ENCODE measurements at regions of chr6 and their contacts with region 1.

Region 1: GRCh38 chr6:25889877-25890853 is 16.1 kb upstream of the SLC17A3 start:
- DNase-seq: peak; percentile 39 to 67
- H3K4me3 ChIP-seq: no peak overlapping the region
- H3K4me3 Mint-ChIP-seq: no peak overlapping the region
- H3K27ac Mint-ChIP-seq: no peak overlapping the region
- H3K4me1 ChIP-seq: no peaks in the 10 kb centered on the region
- H3K4me1 Mint-ChIP-seq: no peaks in the 10 kb centered on the region
- H3K27me3 ChIP-seq: no peaks in the 10 kb centered on the region
- H3K27me3 Mint-ChIP-seq: no peaks in the 10 kb centered on the region
- CTCF ChIP-seq: peak; percentile 31 to 50

Region 2: GRCh38 chr6:25788305-25788922 is 101.8 kb before region 1 on chr6:
- CTCF ChIA-PET with region 1: interaction called, 5 read pairs
- POLR2A ChIA-PET with region 1: no interaction called
- intact Hi-C with region 1: loop called (anchors 1 kb)
- DNase-seq: peak; percentile 66 to 77
- H3K4me3 ChIP-seq: no peak overlapping the region
- H3K4me3 Mint-ChIP-seq: no peak overlapping the region
- H3K27ac Mint-ChIP-seq: no peak overlapping the region
- H3K4me1 ChIP-seq: no peaks in the 10 kb centered on the region
- H3K4me1 Mint-ChIP-seq: no peaks in the 10 kb centered on the region
- H3K27me3 ChIP-seq: no peaks in the 10 kb centered on the region
- H3K27me3 Mint-ChIP-seq: peaks cover 3% of the 10 kb centered on the region
- CTCF ChIP-seq: peak; percentile 46 to 73

Region 3: DNA sequence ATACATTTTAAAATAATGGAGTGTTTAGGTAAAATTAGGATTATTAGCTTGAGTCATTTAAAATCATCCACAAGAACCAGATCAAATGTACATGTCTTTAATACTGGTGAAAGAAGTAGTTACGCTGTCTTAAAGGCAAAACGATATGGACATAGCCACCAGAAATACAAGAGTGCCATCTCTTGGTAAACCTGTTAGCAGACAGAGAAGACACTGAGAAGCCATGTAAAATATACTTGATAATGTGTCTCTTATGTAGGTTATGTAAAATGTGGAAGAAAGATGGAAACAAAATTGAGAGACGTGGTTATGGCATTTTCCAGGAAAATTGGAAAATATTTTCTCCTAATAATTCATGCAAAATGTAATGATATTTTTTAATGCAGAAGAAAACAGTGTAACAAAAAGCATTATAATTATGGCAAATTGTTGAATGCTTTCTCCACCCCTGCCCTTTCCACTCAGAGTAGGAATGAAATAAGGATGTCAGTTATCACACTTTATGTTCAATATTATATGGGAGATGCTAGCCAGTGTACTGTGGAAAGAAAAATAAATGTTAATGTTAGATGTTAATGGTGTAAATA is 52.5 kb after region 1 on chr6:
- CTCF ChIA-PET with region 1: no interaction called
- POLR2A ChIA-PET with region 1: no interaction called
- intact Hi-C with region 1: loop called (anchors 1 kb)
- DNase-seq: peak in 1 of 2 experiments; percentile 37
- H3K4me3 ChIP-seq: no peak overlapping the region
- H3K4me3 Mint-ChIP-seq: no peak overlapping the region
- H3K27ac Mint-ChIP-seq: no peak overlapping the region
- H3K4me1 ChIP-seq: peaks cover 11% of the 10 kb centered on the region; the same call in 1 of the 2 replicates
- H3K4me1 Mint-ChIP-seq: peaks cover 11% of the 10 kb centered on the region
- H3K27me3 ChIP-seq: no peaks in the 10 kb centered on the region
- H3K27me3 Mint-ChIP-seq: no peaks in the 10 kb centered on the region
- CTCF ChIP-seq: peak; percentile 47 to 65